Left ventricle myocardium superior (tissue), 1 donor: ENCODE measurements at regions of chr14 and their contacts with region 1.

Region 1: GRCh38 chr14:61750708-61751474 is 11.3 kb upstream of the SNAPC1 start:
- DNase-seq: peak; percentile 95
- ATAC-seq: peak; percentile 97

Region 2: DNA sequence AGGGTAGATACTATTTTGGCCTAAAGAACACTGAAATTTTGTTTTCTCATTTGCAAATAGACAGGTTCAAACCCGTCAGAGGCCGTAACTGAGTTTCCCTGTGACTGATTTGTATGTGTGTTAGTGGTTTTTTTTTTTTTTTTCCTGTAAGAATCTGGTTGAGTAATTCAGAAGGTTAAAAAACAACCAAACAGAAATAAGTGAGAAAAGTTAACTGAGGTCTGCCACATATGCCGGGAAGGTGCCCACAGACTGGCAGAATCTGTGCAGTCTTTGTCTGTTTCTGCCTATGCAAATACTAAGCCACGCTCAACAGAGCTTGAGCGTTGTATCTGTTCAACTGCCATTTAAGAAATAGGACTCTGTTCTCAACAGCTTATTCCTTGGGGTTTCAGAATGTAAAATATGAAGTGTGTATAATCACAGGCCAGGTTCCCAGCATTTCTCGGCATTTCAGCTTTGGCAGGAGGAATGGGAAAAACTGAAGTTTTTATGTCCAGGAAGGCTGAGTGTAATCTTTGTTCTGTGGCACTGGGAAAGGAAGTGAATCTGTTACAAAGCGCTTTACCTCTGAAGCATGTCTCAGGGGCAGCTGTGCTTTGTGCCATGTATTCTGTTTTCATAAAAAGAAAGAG is 247.6 kb before region 1 on chr14:
- intact Hi-C with region 1: no loop called
- DNase-seq: no peak
- ATAC-seq: peak; percentile 20

Region 3: DNA sequence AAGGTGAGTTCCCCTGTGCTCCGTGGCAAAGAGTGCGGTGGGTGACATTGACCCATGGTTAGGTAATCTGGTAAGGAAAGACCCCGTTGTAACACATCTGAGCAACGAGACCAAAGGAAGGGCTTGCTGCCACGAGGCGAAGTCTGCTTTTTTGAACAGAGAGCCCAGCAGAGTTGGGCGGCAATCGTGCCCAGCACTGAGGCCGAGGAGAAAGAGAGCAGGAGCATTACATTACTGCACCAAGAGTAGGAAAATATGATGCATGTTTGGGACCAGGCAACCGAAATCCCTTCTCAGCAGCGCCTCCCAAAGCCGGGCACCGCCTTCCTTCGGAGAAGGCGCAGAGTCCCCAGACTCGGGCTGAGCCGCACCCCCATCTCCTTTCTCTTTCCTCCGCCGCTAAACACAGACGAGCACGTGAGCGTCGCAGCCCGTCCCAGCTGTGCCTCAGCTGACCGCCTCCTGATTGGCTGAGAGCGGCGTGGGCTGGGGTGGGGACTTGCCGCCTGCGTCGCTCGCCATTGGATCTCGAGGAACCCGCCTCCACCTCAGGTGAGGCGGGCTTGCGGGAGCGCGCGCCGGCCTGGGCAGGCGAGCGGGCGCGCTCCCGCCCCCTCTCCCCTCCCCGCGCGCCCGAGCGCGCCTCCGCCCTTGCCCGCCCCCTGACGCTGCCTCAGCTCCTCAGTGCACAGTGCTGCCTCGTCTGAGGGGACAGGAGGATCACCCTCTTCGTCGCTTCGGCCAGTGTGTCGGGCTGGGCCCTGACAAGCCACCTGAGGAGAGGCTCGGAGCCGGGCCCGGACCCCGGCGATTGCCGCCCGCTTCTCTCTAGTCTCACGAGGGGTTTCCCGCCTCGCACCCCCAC is 55.8 kb before region 1 on chr14 and contains the start of gene HIF1A:
- intact Hi-C with region 1: loop called (anchors 2 kb)
- DNase-seq: peak; percentile 97
- ATAC-seq: peak; percentile 97
- total RNA-seq, gene HIF1A: 55.0 TPM

Region 4: GRCh38 chr14:61706096-61706690 is 44.7 kb before region 1 on chr14:
- intact Hi-C with region 1: no loop called
- DNase-seq: no peak
- ATAC-seq: no peak

Region 5: DNA sequence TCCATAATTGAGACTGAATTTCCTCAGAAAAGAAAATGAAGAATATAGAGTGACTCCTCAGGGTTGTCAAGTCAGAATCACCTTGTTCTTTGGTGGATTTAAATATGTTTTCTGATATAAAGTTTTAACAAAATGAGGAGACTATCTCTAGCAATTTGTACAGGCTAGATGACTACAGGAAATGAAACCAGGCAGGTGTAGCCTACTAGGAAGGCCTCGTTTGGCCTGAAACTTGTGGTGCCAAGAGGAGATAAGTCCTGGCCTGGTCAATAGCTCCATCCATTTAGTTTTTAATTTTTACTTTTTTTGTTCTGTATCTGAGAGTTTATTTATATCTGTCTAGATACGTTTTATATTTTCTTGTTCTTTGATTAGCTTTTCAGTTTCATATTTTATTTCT is 52.9 kb after region 1 on chr14:
- intact Hi-C with region 1: no loop called
- DNase-seq: no peak
- ATAC-seq: no peak